ENCODE measurements at regions of chr2 and their contacts with region 1.

Region 1: GRCh38 chr2:64675860-64676259 is 22.1 kb upstream of the SERTAD2 start:
- DNase-seq: peak; percentile 79
- H3K4me3 Mint-ChIP-seq: no peak overlapping the region
- H3K27ac Mint-ChIP-seq: peak overlapping the region; percentile 71
- H3K4me1 Mint-ChIP-seq: peaks cover 45% of the 10 kb centered on the region
- H3K27me3 Mint-ChIP-seq: no peaks in the 10 kb centered on the region

Region 2: GRCh38 chr2:64730551-64731262 is 54.8 kb after region 1 on chr2:
- intact Hi-C with region 1: loop called (anchors 2 kb)
- DNase-seq: peak; percentile 85
- H3K4me3 Mint-ChIP-seq: peak overlapping the region; percentile 84
- H3K27ac Mint-ChIP-seq: peak overlapping the region; percentile 95
- H3K4me1 Mint-ChIP-seq: peaks cover 55% of the 10 kb centered on the region
- H3K27me3 Mint-ChIP-seq: no peaks in the 10 kb centered on the region

Measured in activated CD4-positive, alpha-beta T cell treated with anti-CD3 and anti-CD28 coated beads, Interleukin-2, amount 10 ng/mL, durations not matched to agents 24 days and 14 days (primary cell).